Activated CD8-positive, alpha-beta T cell treated with anti-CD3 and anti-CD28 coated beads, Interleukin-2, amount 10 ng/mL, durations not matched to agents 7 days and 5 days (primary cell): ENCODE measurements at regions of chr6 and their contacts with region 1.

Region 1: DNA sequence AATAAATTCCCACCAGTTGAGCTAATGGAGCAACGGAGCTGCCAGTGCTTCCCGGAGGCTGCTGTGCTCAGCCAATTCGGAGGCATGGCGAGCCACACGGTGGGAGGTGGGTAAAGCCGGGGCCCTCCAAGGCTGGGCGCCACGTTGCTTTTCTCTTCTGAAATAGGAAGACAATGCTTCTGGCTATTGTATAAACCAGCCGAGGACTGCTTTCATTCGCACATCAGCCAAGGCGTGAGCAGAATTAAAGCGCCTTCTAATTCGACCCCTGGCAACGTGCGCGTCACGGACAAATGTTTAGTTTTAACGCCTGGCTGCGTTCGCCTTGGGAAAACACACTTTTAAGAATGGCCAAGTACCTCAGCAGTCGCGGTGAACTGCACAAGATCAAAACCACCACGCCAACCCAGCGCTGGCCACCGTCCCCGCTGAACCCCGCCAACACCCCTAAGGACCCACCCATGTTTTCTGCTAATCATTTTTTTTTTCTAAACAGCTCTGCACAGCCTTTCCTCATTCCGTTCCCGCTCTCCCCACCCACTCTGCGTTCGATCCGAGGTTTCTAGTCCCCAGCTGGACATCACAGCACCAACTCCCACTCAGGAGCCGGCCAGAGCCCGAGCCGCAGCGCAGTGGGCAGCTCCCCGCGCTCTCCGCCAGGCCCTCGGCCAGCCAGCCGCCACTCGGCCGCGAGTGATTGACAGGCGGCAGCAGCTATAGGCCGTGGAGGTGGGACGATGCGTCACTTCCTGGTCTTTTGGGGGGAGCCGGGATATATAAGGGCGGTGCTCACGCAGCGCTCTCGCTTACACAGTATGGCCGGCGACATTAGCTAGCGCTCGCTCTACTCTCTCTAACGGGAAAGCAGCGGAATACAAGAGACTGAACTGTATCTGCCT is at the start of gene AMD1:
- DNase-seq: peak; percentile 97
- ATAC-seq: peak; percentile 74
- H3K4me3 Mint-ChIP-seq: peak within 1 kb of the TSS; percentile 95
- H3K27ac Mint-ChIP-seq: peak within 1 kb of the TSS; percentile 98
- H3K4me1 Mint-ChIP-seq: peaks cover 25% of the 10 kb centered on the region
- H3K27me3 Mint-ChIP-seq: no peaks in the 10 kb centered on the region
- total RNA-seq, gene AMD1: 75.5 to 77.7 TPM

Region 2: GRCh38 chr6:110528101-110528929 is 345.9 kb before region 1 on chr6:
- CTCF ChIA-PET with region 1: interaction called, 16 read pairs
- POLR2A ChIA-PET with region 1: no interaction called
- DNase-seq: peak; percentile 72
- ATAC-seq: peak; percentile 60
- H3K4me3 Mint-ChIP-seq: no peak overlapping the region
- H3K27ac Mint-ChIP-seq: no peak overlapping the region
- H3K4me1 Mint-ChIP-seq: peaks cover 5% of the 10 kb centered on the region
- H3K27me3 Mint-ChIP-seq: peaks cover 2% of the 10 kb centered on the region

Region 3: GRCh38 chr6:110688661-110689268 is 185.5 kb before region 1 on chr6:
- CTCF ChIA-PET with region 1: interaction called, 90 read pairs
- POLR2A ChIA-PET with region 1: interaction called, 20 read pairs
- DNase-seq: no peak
- ATAC-seq: peak; percentile 59
- H3K4me3 Mint-ChIP-seq: no peak overlapping the region
- H3K27ac Mint-ChIP-seq: peak overlapping the region; percentile 49
- H3K4me1 Mint-ChIP-seq: peaks cover 26% of the 10 kb centered on the region
- H3K27me3 Mint-ChIP-seq: no peaks in the 10 kb centered on the region

Region 4: DNA sequence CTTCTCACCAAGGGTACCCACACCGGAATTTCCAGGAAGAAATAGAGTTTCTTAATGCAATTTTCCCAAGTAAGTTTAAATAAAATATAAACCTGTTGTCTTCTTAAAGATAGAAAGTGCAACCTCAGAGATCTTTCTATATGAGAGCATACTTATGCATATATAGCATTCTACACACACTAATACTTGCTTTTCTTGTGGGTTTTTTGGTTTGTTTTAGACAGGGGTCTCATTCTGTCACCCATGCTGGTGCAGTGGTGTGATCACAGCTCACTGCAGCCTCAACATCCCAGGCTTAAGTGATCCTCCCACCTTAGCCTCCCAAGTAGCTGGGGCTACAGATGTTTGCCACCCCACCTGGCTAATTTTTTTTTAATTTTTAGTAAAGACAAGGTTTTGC is 16.1 kb after region 1 on chr6:
- CTCF ChIA-PET with region 1: interaction called, 40 read pairs
- POLR2A ChIA-PET with region 1: interaction called, 11 read pairs
- DNase-seq: no peak
- ATAC-seq: no peak
- H3K4me3 Mint-ChIP-seq: no peak overlapping the region
- H3K27ac Mint-ChIP-seq: no peak overlapping the region
- H3K4me1 Mint-ChIP-seq: peaks cover 20% of the 10 kb centered on the region
- H3K27me3 Mint-ChIP-seq: no peaks in the 10 kb centered on the region

Region 5: GRCh38 chr6:110949679-110950285 is 75.6 kb after region 1 on chr6:
- CTCF ChIA-PET with region 1: interaction called, 13 read pairs
- POLR2A ChIA-PET with region 1: interaction called, 18 read pairs
- DNase-seq: no peak
- ATAC-seq: no peak
- H3K4me3 Mint-ChIP-seq: no peak overlapping the region
- H3K27ac Mint-ChIP-seq: no peak overlapping the region
- H3K4me1 Mint-ChIP-seq: peaks cover 7% of the 10 kb centered on the region
- H3K27me3 Mint-ChIP-seq: peaks cover 8% of the 10 kb centered on the region

Region 6: GRCh38 chr6:110981202-110981600 is 107.0 kb after region 1 on chr6:
- CTCF ChIA-PET with region 1: interaction called, 10 read pairs
- POLR2A ChIA-PET with region 1: interaction called, 40 read pairs
- DNase-seq: no peak
- ATAC-seq: peak; percentile 1
- H3K4me3 Mint-ChIP-seq: peak overlapping the region; percentile 97
- H3K27ac Mint-ChIP-seq: peak overlapping the region; percentile 99
- H3K4me1 Mint-ChIP-seq: peaks cover 32% of the 10 kb centered on the region
- H3K27me3 Mint-ChIP-seq: no peaks in the 10 kb centered on the region